Activated CD8-positive, alpha-beta T cell treated with anti-CD3 and anti-CD28 coated beads for 36 hours (primary cell): ENCODE measurements at regions of chr9 and their contacts with region 1.

Region 1: GRCh38 chr9:70614786-70615463 is 200.5 kb upstream of the KLF9 start:
- DNase-seq: no peak
- ATAC-seq: no peak
- H3K4me3 Mint-ChIP-seq: no peak overlapping the region
- H3K27ac Mint-ChIP-seq: no peak overlapping the region
- H3K4me1 Mint-ChIP-seq: no peaks in the 10 kb centered on the region
- H3K27me3 Mint-ChIP-seq: peaks cover 1% of the 10 kb centered on the region
- CTCF ChIP-seq: no peak

Region 2: GRCh38 chr9:70574151-70574837 is 40.6 kb before region 1 on chr9:
- CTCF ChIA-PET with region 1: no interaction called
- POLR2A ChIA-PET with region 1: no interaction called
- intact Hi-C with region 1: no loop called
- DNase-seq: no peak
- ATAC-seq: no peak
- H3K4me3 Mint-ChIP-seq: no peak overlapping the region
- H3K27ac Mint-ChIP-seq: no peak overlapping the region
- H3K4me1 Mint-ChIP-seq: peaks cover 8% of the 10 kb centered on the region
- H3K27me3 Mint-ChIP-seq: no peaks in the 10 kb centered on the region
- CTCF ChIP-seq: no peak

Region 3: GRCh38 chr9:70625078-70625477 is 10.2 kb after region 1 on chr9:
- CTCF ChIA-PET with region 1: interaction called, 12 read pairs
- POLR2A ChIA-PET with region 1: no interaction called
- intact Hi-C with region 1: no loop called
- DNase-seq: peak; percentile 21
- ATAC-seq: no peak
- H3K4me3 Mint-ChIP-seq: no peak overlapping the region
- H3K27ac Mint-ChIP-seq: no peak overlapping the region
- H3K4me1 Mint-ChIP-seq: no peaks in the 10 kb centered on the region
- H3K27me3 Mint-ChIP-seq: peaks cover 1% of the 10 kb centered on the region
- CTCF ChIP-seq: no peak

Region 4: GRCh38 chr9:70668751-70669150 is 53.8 kb after region 1 on chr9:
- CTCF ChIA-PET with region 1: no interaction called
- POLR2A ChIA-PET with region 1: no interaction called
- intact Hi-C with region 1: loop called (anchors 5 kb)
- DNase-seq: no peak
- ATAC-seq: no peak
- H3K4me3 Mint-ChIP-seq: no peak overlapping the region
- H3K27ac Mint-ChIP-seq: no peak overlapping the region
- H3K4me1 Mint-ChIP-seq: peaks cover 8% of the 10 kb centered on the region
- H3K27me3 Mint-ChIP-seq: peaks cover 5% of the 10 kb centered on the region
- CTCF ChIP-seq: no peak